Natural killer cell (primary cell): ENCODE measurements at regions of chr22 and their contacts with region 1.

Region 1: GRCh38 chr22:40922484-40923303 is 28.5 kb upstream of the RBX1 start:
- DNase-seq: peak in 1 of 2 donors; percentile 85
- ATAC-seq: peak; percentile 79 to 96 (median 88)
- H3K4me3 ChIP-seq: no peak overlapping the region
- H3K4me3 Mint-ChIP-seq: no peak overlapping the region
- H3K27ac ChIP-seq: no peak overlapping the region
- H3K27ac Mint-ChIP-seq: peak overlapping the region; percentile 37 to 68
- H3K4me1 ChIP-seq: peaks cover 3% of the 10 kb centered on the region
- H3K4me1 Mint-ChIP-seq: peaks cover 4 to 8% of the 10 kb centered on the region in 2 donors
- H3K27me3 ChIP-seq: no peaks in the 10 kb centered on the region
- H3K27me3 Mint-ChIP-seq: no peaks in the 10 kb centered on the region
- CTCF ChIP-seq: peak; percentile 79

Region 2: DNA sequence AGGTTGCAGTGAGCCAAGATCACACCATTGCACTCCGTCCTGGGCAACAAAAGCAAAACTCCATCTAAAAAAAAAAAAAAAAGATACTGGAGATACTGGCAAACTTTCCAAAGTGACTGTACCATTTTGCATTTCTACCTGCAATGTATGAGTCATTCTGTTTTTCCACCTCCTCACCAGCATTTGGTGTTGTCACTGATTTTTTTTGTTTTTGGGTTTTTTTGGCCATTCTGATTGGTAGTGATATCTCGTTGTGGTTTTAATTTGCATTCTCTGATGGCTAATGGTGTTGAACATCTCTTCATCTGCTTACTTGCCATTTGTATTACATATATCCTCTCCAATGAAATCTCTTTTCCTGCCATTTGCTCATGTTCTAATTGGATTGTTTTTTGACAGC is 16.5 kb after region 1 on chr22:
- intact Hi-C with region 1: no loop called
- DNase-seq: no peak
- ATAC-seq: no peak
- H3K4me3 ChIP-seq: no peak overlapping the region
- H3K4me3 Mint-ChIP-seq: no peak overlapping the region
- H3K27ac ChIP-seq: no peak overlapping the region
- H3K27ac Mint-ChIP-seq: no peak overlapping the region
- H3K4me1 ChIP-seq: peaks cover 6% of the 10 kb centered on the region
- H3K4me1 Mint-ChIP-seq: no peaks in the 10 kb centered on the region
- H3K27me3 ChIP-seq: no peaks in the 10 kb centered on the region
- H3K27me3 Mint-ChIP-seq: no peaks in the 10 kb centered on the region
- CTCF ChIP-seq: no peak

Region 3: GRCh38 chr22:40950962-40951794 is 28.5 kb after region 1 on chr22 and contains the start of gene RBX1:
- intact Hi-C with region 1: loop called (anchors 1 kb)
- DNase-seq: peak; percentile 98 to 100
- ATAC-seq: peak; percentile 81 to 94 (median 81)
- H3K4me3 ChIP-seq: peak within 1 kb of the TSS; percentile 98
- H3K4me3 Mint-ChIP-seq: peak within 1 kb of the TSS; percentile 99
- H3K27ac ChIP-seq: peak within 1 kb of the TSS; percentile 99
- H3K27ac Mint-ChIP-seq: peak within 1 kb of the TSS; percentile 98 to 100
- H3K4me1 ChIP-seq: peaks cover 23% of the 10 kb centered on the region
- H3K4me1 Mint-ChIP-seq: peaks cover 22 to 31% of the 10 kb centered on the region in 2 donors
- H3K27me3 ChIP-seq: no peaks in the 10 kb centered on the region
- H3K27me3 Mint-ChIP-seq: no peaks in the 10 kb centered on the region
- CTCF ChIP-seq: no peak
- total RNA-seq, gene RBX1: 27.1 to 34.3 (median 28.5) TPM

Region 4: DNA sequence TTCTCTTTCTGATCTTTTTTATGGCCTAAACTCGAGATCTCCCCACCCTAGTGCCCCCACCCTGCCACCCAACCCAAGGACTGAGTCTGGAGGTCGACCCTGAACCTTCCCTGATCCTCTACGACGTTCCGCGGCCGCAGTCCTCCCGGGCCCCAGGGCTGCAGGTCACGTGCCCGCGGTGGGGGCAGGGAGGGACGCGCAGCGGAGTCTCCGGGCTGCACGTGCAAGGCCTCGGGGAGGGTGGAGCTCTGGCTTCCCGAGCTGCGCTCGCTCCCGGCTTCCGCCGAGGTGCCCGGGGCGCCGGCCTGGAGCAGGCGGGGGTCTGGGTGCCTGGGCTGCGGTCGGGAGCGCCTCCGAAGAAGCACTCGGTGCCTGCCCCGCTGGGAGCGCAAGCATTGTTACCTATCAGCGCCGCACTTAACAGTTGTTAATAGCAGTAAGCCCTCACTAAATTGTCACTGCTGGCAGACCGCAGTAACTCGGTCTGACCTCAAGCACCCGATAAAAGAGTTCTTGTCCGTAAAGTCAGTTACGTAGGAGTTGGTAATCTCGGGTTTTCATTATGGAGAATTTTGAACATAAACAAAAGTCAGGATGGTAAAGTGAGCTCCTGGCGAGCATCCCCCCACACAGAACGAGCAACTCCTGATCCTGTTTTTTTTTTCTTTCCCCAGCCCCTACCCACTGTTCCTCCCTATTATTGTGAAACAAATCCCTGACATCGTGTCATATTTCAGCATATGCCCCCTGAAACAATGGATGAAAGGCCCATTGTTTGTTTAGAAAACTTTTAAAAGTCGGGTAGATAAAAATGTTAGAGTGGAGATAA is 100.0 kb after region 1 on chr22:
- intact Hi-C with region 1: loop called (anchors 10 kb)
- DNase-seq: peak; percentile 64 to 88
- ATAC-seq: peak; percentile 78 to 81 (median 80)
- H3K4me3 ChIP-seq: peak overlapping the region; percentile 52
- H3K4me3 Mint-ChIP-seq: peak overlapping the region; percentile 42
- H3K27ac ChIP-seq: peak overlapping the region; percentile 65
- H3K27ac Mint-ChIP-seq: peak overlapping the region in 1 of 2 donors; percentile 78
- H3K4me1 ChIP-seq: peaks cover 15% of the 10 kb centered on the region
- H3K4me1 Mint-ChIP-seq: peaks cover 0 to 12% of the 10 kb centered on the region in 2 donors
- H3K27me3 ChIP-seq: peaks cover 3% of the 10 kb centered on the region
- H3K27me3 Mint-ChIP-seq: peaks cover 20 to 24% of the 10 kb centered on the region in 2 donors
- CTCF ChIP-seq: no peak

Region 5: DNA sequence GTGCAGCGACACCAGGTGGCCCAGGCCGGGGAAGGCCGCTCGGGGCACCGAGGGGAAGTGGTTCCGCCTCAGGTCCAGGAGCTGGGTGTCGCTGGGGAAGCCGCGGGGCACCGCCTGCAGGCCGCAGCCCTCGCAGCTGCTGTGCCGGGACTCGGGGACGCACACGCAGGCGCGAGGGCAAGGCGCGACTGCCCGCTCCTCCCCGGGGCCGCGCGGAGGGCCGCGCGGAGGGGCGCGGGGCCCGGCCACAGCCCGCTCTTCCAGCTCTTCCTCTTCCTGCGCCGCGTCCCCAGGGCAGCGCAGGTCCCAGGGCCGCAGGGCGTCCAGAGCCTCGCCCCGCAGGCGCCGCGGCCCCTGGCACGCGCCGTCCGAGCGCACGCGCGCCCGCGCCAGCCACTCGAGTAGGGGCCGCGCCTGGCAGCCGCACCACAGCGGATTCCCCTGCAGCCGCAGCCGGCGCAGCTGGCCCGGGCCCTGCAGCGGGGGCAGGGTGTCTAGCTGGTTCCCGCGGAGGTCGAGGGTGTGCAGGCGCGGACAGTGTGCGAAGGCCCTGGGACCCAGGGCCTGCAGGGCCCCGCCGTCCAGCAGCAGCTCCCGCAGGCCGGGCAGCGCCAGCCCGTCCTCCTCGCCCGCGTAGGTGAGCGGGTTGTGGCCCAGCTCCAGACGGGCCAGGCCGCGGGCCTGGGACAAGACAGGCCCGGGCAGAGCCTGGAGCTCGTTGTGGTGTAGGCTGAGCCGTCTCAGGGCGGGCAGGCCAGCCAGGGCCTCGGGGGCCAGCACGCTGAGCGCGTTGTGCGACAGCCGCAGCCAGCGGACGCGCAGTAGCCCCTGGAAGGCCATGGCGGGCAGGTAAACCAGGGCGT is 315.2 kb after region 1 on chr22:
- intact Hi-C with region 1: loop called (anchors 2 kb)
- DNase-seq: peak; percentile 50 to 91
- ATAC-seq: peak; percentile 84 to 90 (median 88)
- H3K4me3 ChIP-seq: peak overlapping the region; percentile 27
- H3K4me3 Mint-ChIP-seq: peak overlapping the region; percentile 82
- H3K27ac ChIP-seq: no peak overlapping the region
- H3K27ac Mint-ChIP-seq: no peak overlapping the region
- H3K4me1 ChIP-seq: peaks cover 7% of the 10 kb centered on the region
- H3K4me1 Mint-ChIP-seq: peaks cover 5 to 13% of the 10 kb centered on the region in 2 donors
- H3K27me3 ChIP-seq: no peaks in the 10 kb centered on the region
- H3K27me3 Mint-ChIP-seq: peaks cover 0 to 3% of the 10 kb centered on the region in 2 donors
- CTCF ChIP-seq: peak; percentile 34

Region 6: GRCh38 chr22:41301105-41302020 is 378.7 kb after region 1 on chr22 and contains the start of gene ZC3H7B:
- intact Hi-C with region 1: loop called (anchors 5 kb)
- DNase-seq: peak; percentile 74 to 93
- ATAC-seq: peak; percentile 98
- H3K4me3 ChIP-seq: peak within 1 kb of the TSS; percentile 97
- H3K4me3 Mint-ChIP-seq: peak within 1 kb of the TSS; percentile 84
- H3K27ac ChIP-seq: peak within 1 kb of the TSS; percentile 71
- H3K27ac Mint-ChIP-seq: peak within 1 kb of the TSS; percentile 77 to 90
- H3K4me1 ChIP-seq: peaks cover 17% of the 10 kb centered on the region
- H3K4me1 Mint-ChIP-seq: peaks cover 21 to 30% of the 10 kb centered on the region in 2 donors
- H3K27me3 ChIP-seq: no peaks in the 10 kb centered on the region
- H3K27me3 Mint-ChIP-seq: no peaks in the 10 kb centered on the region
- CTCF ChIP-seq: peak; percentile 53
- total RNA-seq, gene ZC3H7B: 33.9 to 40.3 (median 38.3) TPM